SK-N-SH (cell line): ENCODE measurements at regions of chr1 and their contacts with region 1.

Region 1: GRCh38 chr1:150281837-150282653 is at the start of gene CIART:
- DNase-seq: peak; percentile 83
- H3K4me3 ChIP-seq: peak within 1 kb of the TSS; percentile 29 to 52
- H3K27ac ChIP-seq: peak within 1 kb of the TSS in 1 of 2 experiments; percentile 68; a peak in 2 of 4 replicates
- H3K4me1 ChIP-seq: peaks cover 4 to 14% of the 10 kb centered on the region in 2 experiments; a peak in 1 of 4 replicates
- H3K27me3 ChIP-seq: no peaks in the 10 kb centered on the region
- CTCF ChIP-seq: no peak
- EP300 ChIP-seq: no peak
- RAD21 ChIP-seq: no peak
- polyA plus RNA-seq, gene CIART: 3.2 and 4.4 TPM in 2 replicates

Region 2: DNA sequence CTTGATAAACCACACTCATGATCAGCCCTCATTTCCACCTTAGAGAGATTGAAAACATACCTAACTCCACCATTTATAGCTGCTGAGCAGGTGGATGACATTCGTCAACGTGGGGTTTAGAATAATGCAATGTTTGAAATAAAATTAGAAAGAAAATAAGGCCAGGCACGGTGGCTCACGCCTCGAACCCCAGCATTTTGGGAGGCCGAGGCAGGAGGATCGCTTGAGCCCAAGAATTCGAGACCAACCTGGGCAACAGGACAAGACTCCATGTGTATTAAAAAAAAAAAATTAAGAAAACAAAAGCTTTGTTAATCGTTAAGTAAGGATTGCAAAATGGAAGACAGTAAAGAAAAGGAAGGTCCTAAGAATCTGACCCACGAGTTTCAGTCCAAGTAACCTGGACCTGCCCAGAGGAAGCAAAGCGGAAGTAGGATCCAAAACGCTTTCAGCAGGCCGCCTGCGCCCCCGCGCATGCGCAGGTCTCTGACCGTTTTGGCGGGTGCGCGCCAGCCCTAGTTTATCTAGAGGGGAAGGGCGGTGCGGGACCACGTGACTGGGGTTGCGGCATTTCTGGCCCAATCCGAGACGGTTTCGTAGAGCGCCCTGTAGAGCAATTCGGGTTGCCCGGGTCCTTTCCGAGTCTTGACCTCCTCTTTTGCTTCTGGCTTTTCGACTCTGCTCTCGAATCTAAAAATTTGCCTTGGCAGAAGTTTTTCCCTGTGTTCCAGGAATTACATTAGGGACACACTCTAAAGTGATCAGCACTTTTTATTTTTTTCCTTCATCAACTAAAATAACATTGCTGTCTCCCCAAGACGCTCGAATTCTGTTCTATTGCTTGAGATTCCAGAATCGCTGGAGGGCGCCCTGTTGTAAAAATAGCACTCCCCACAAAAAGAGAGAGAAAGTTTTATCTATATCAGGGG is 68.6 kb before region 1 on chr1:
- CTCF ChIA-PET with region 1: no interaction called
- POLR2A ChIA-PET with region 1: no interaction called
- DNase-seq: peak; percentile 93
- H3K4me3 ChIP-seq: peak overlapping the region; percentile 47 to 51
- H3K27ac ChIP-seq: peak overlapping the region; percentile 65 to 88
- H3K4me1 ChIP-seq: peaks cover 0 to 5% of the 10 kb centered on the region in 2 experiments; a peak in 3 of 4 replicates
- H3K27me3 ChIP-seq: no peaks in the 10 kb centered on the region
- CTCF ChIP-seq: peak; percentile 60
- EP300 ChIP-seq: no peak
- RAD21 ChIP-seq: peak; percentile 31; the same call in 1 of the 2 replicates

Region 3: DNA sequence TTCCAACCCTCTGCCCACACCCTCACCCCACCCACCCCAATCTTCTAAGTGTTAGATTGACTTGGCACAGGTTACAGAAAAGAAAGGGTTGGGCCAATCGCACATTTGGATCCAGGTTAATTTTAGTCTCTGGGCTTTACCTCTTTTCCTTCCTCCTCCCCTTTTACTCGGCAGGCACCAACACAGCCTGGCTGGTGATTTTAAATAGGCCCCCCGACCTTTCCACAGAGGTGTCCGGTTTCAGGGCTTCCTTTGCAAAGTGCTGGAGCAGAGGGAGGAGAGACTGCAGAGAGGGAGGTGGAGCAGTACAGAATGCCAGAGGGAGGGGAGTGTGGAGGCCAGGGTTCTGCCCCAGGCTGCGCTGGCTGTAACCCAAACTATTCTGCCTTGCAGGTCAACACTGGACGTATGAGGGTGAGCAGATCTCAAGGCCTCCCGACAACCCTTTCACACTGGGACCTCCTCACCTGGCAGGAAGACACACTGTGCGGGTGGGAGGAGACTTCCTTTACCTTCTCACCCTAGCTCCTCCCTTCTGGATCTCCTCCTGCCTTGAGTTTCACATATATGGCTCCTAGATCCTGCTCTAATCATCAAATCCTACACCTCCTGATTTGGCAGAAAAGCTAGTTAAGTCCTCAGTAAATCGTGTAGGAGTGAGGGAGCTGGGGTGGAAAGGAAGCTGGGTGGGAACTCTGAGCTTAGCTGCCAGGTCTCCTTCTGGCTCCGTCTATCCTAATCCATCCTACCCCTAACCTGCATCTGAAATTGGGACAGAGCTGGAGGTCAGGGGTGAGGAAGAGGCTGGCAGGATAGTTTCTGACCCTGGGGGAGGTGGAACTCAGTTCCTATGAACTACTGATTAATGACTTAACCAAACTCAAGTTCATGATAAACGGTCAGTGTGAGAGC is 22.0 kb before region 1 on chr1:
- CTCF ChIA-PET with region 1: interaction called, 110 read pairs
- POLR2A ChIA-PET with region 1: interaction called, 3 read pairs
- DNase-seq: peak; percentile 21
- H3K4me3 ChIP-seq: no peak overlapping the region
- H3K27ac ChIP-seq: peak overlapping the region in 1 of 2 experiments; percentile 17; a peak in 1 of 4 replicates
- H3K4me1 ChIP-seq: peaks cover 17 to 21% of the 10 kb centered on the region in 2 experiments; a peak in 3 of 4 replicates
- H3K27me3 ChIP-seq: no peaks in the 10 kb centered on the region
- CTCF ChIP-seq: no peak
- EP300 ChIP-seq: no peak
- RAD21 ChIP-seq: no peak

Region 4: DNA sequence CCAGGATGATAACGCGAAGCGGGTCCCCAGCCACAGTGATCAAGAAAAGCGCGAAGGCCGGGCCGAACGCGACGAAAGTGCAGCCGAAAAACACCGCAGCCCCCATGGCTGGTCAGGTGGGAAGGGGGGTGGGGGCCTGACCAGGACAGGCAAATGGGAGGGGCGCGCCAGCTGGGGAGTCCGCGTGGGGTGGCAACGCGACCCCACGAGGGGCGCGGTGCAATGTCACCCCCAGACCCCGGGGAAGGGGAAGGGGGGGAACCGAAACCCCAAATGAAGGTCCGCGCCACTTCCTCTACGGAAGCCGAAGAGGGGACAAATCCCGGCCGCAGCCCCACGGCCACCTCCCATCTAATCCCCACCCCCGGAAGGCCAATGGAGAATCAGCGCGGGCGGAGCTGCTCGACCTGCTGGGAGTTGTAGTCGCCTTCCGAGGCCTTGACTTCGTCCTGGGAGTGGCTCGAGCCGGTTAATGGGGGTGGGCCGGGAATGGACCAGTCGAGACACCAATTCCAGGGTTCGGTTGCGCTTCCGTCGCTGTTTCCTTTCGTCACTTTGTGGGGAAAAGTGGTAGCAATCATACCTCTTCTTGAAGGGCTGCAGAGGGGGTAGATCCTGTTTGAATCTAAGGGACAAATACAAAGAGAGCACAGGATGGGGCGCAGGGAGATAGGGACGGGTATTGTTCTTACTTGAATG is 13.2 kb before region 1 on chr1 and contains the start of gene APH1A:
- CTCF ChIA-PET with region 1: interaction called, 20 read pairs
- POLR2A ChIA-PET with region 1: interaction called, 3 read pairs
- DNase-seq: peak; percentile 98
- H3K4me3 ChIP-seq: peak within 1 kb of the TSS; percentile 90 to 93
- H3K27ac ChIP-seq: peak within 1 kb of the TSS; percentile 70 to 87
- H3K4me1 ChIP-seq: peaks cover 7 to 13% of the 10 kb centered on the region in 2 experiments; a peak in 2 of 4 replicates
- H3K27me3 ChIP-seq: no peaks in the 10 kb centered on the region
- CTCF ChIP-seq: no peak
- EP300 ChIP-seq: peak in 1 of 2 experiments; percentile 24; a peak in 2 of 4 replicates
- RAD21 ChIP-seq: no peak
- polyA plus RNA-seq, gene APH1A: 175 and 232 TPM in 2 replicates

Region 5: DNA sequence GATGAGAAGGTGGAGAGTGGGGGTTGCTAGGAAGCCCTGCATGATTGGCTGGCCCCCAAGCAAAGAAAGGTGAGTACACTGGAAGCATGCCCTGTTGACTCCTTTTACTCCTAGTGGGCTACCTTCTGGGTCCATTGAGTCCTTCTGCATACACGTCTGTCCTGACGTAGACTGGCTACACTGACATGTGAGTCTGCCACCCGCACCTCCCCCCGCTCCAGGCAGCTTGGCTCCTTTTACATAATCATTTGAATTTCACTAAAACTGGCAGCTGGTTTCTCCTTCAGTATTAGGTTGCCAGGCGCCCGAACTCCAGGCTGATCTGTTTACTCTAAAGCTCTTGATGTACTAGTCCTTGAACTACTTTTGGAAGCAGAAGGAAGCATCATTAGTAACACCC is 20.3 kb after region 1 on chr1:
- CTCF ChIA-PET with region 1: no interaction called
- POLR2A ChIA-PET with region 1: no interaction called
- DNase-seq: no peak
- H3K4me3 ChIP-seq: no peak overlapping the region
- H3K27ac ChIP-seq: no peak overlapping the region
- H3K4me1 ChIP-seq: no peaks in the 10 kb centered on the region; a peak in 1 of 4 replicates
- H3K27me3 ChIP-seq: no peaks in the 10 kb centered on the region
- CTCF ChIP-seq: no peak
- EP300 ChIP-seq: no peak
- RAD21 ChIP-seq: no peak